ENCODE measurements at regions of chr22 and their contacts with region 1.

Region 1: GRCh38 chr22:37199103-37199759 is 11.2 kb upstream of the C1QTNF6 start:
- DNase-seq: peak; percentile 84
- H3K4me3 ChIP-seq: peak overlapping the region; percentile 66
- H3K27me3 ChIP-seq: no peaks in the 10 kb centered on the region
- CTCF ChIP-seq: peak; percentile 97

Region 2: DNA sequence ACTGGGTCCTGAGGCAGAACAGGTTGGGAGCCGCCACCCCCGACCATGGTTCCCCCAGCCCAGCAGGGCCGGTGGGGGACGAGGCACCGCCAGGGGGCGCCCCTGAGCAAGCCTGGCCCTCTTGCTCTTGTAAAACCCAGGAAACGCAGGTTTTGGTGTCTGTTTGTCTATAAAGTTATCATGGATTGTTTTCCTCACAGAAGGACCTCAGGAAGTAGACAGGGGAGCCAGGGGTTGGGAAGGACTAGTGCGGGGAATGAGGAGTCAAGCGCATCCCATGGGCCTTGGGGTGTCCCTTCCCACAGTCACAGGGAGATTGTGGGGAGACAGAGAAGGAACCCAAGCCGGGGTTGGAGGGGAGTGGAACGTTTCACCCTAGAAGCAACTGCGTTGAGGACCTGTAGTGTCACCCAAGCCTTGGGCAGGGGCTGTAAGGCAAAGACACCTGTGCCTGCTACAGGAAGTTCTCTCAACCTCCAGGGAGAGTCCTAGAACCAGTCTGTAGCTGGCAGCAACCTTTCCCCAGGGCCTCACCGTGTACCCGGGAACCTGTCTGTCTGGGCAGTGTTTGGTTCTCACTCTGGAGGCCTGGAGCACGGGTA is 121.2 kb before region 1 on chr22:
- CTCF ChIA-PET with region 1: interaction called, 13 read pairs
- POLR2A ChIA-PET with region 1: no interaction called
- DNase-seq: no peak
- H3K4me3 ChIP-seq: no peak overlapping the region
- H3K27me3 ChIP-seq: peaks cover 8% of the 10 kb centered on the region
- CTCF ChIP-seq: peak; percentile 99

Region 3: GRCh38 chr22:37098976-37099591 is 100.1 kb before region 1 on chr22:
- CTCF ChIA-PET with region 1: no interaction called
- POLR2A ChIA-PET with region 1: no interaction called
- DNase-seq: no peak
- H3K4me3 ChIP-seq: no peak overlapping the region
- H3K27me3 ChIP-seq: peaks cover 26% of the 10 kb centered on the region
- CTCF ChIP-seq: no peak; the same call in 1 of the 2 replicates

Region 4: DNA sequence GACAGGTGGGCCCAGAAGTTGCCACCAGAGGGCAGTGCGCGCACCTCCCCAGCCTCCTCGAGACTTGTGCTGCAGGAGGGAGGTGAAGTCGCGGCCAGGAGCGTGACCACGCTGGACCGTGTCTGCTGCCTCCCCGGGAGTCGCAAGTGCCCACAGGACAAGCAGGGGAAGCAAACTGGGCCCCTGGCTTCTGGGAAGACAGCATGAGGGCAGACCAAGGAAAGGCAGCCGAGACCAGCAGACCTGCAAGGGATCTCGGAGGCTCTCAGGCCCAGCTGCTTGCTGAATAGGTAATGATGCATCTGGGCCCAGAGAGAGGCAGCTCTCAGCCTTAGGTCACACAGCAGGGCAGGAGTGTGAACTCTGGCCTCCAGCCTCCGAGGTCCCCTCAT is 32.6 kb before region 1 on chr22:
- CTCF ChIA-PET with region 1: interaction called, 161 read pairs
- POLR2A ChIA-PET with region 1: no interaction called
- DNase-seq: no peak
- H3K4me3 ChIP-seq: no peak overlapping the region
- H3K27me3 ChIP-seq: peaks cover 8% of the 10 kb centered on the region
- CTCF ChIP-seq: peak; percentile 90

Region 5: GRCh38 chr22:37186228-37186996 is 12.8 kb before region 1 on chr22:
- CTCF ChIA-PET with region 1: interaction called, 25 read pairs
- POLR2A ChIA-PET with region 1: no interaction called
- DNase-seq: no peak
- H3K4me3 ChIP-seq: no peak overlapping the region
- H3K27me3 ChIP-seq: no peaks in the 10 kb centered on the region
- CTCF ChIP-seq: no peak

Region 6: DNA sequence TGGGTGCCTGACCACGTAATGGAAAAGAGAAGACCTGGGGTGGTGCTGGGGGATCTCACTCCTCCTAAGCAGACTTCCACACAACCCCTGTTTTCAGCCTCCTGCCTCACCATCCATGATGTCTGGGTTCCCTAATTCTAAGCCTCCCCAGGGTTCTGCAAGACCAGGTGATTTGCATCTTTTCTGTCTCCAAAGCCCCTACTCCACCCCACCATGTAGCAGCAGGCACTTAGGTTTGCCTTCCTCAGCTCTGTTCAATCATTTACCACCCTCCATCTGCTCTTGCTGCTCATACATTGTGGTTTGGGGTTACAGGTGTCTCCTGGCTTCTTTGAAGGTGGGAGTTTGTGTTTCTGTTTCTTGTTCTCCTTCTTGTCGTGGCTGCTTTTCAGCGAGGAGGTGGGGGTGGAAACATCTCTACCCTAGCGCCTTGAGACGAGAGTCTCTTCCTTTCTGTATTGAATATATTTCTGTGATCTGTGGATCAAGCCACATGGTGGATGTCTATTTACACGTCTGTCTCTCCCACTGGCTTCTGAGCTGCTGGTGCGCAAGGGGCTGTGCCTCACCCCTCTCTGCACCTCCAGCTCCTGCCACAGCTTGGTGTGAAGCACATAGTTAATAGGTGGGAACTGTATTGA is 19.7 kb after region 1 on chr22:
- CTCF ChIA-PET with region 1: interaction called, 25 read pairs
- POLR2A ChIA-PET with region 1: no interaction called
- DNase-seq: no peak
- H3K4me3 ChIP-seq: no peak overlapping the region
- H3K27me3 ChIP-seq: peaks cover 10% of the 10 kb centered on the region
- CTCF ChIP-seq: no peak

Measured in BJ (cell line).